Calu3 (cell line): ENCODE measurements at regions of chr16 and their contacts with region 1.

Region 1: DNA sequence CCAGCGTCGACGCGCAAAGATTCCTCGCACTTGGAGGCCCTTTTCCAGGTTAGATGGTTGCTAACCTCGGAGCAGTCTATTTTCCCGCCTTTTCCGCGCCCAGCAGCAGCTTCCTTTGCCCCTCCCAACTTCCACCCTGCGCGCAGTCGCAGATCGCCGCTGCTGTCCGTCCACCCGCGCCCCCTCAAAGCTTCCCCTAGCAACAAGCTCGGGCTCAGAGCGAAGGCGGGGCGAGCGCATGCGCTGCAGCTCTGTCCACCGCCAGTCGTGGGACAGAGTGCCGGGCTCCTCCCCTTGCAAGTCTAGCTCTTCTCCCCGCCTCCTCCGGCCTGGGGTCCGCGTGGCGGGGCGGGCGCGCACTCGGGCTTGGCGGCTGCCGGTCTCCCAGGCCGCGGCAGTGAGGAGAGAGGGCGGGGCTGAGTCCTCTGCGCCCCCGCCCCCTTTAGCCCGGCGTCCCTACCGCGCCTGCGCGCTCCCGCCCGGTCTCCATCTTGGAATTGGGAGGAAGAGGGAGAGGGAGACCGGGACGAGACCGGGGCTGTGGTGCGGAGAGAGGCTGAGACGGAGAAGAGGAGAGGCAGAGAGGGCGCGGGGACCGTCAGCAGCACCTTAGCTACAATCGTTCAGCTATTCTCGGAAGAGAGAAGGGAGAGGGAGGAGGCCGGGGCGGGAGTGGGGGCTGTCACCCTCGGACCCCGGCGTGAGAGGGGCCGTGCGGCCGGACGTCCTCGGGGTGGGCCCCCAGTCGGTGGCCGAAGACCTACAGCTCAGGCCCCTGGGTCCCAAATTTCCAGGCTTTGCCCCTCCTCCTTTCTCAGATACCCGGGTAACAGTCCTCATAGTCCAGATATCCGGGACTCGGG is at the start of gene TAOK2:
- DNase-seq: peak; percentile 99
- H3K4me3 Mint-ChIP-seq: peak within 1 kb of the TSS; percentile 85
- H3K27ac Mint-ChIP-seq: peak within 1 kb of the TSS; percentile 89
- H3K4me1 Mint-ChIP-seq: peaks cover 26% of the 10 kb centered on the region
- H3K27me3 Mint-ChIP-seq: no peaks in the 10 kb centered on the region
- CTCF ChIP-seq: no peak
- total RNA-seq, gene TAOK2: 75.9 and 76.2 TPM in 2 replicates

Region 2: GRCh38 chr16:29909391-29909790 is 64.2 kb before region 1 on chr16:
- CTCF ChIA-PET with region 1: no interaction called
- intact Hi-C with region 1: no loop called
- DNase-seq: no peak
- H3K4me3 Mint-ChIP-seq: no peak overlapping the region
- H3K27ac Mint-ChIP-seq: no peak overlapping the region
- H3K4me1 Mint-ChIP-seq: peaks cover 16% of the 10 kb centered on the region
- H3K27me3 Mint-ChIP-seq: no peaks in the 10 kb centered on the region
- CTCF ChIP-seq: no peak

Region 3: GRCh38 chr16:29926005-29926710 is 47.5 kb before region 1 on chr16 and contains the start of gene KCTD13:
- CTCF ChIA-PET with region 1: interaction called, 7 read pairs
- intact Hi-C with region 1: loop called (anchors 10 kb)
- DNase-seq: peak; percentile 94
- H3K4me3 Mint-ChIP-seq: peak within 1 kb of the TSS; percentile 89
- H3K27ac Mint-ChIP-seq: peak within 1 kb of the TSS; percentile 74
- H3K4me1 Mint-ChIP-seq: peaks cover 29% of the 10 kb centered on the region
- H3K27me3 Mint-ChIP-seq: no peaks in the 10 kb centered on the region
- CTCF ChIP-seq: no peak
- total RNA-seq, gene KCTD13: 52.8 and 55.8 TPM in 2 replicates

Region 4: GRCh38 chr16:29943846-29944669 is 29.6 kb before region 1 on chr16:
- CTCF ChIA-PET with region 1: interaction called, 15 read pairs
- intact Hi-C with region 1: no loop called
- DNase-seq: peak; percentile 82
- H3K4me3 Mint-ChIP-seq: peak overlapping the region; percentile 38
- H3K27ac Mint-ChIP-seq: peak overlapping the region; percentile 69
- H3K4me1 Mint-ChIP-seq: peaks cover 30% of the 10 kb centered on the region
- H3K27me3 Mint-ChIP-seq: no peaks in the 10 kb centered on the region
- CTCF ChIP-seq: peak; percentile 33

Region 5: GRCh38 chr16:29961479-29962343 is 11.9 kb before region 1 on chr16 and contains the start of gene TMEM219:
- CTCF ChIA-PET with region 1: interaction called, 17 read pairs
- intact Hi-C with region 1: no loop called
- DNase-seq: peak; percentile 98
- H3K4me3 Mint-ChIP-seq: peak within 1 kb of the TSS; percentile 82
- H3K27ac Mint-ChIP-seq: peak within 1 kb of the TSS; percentile 92
- H3K4me1 Mint-ChIP-seq: peaks cover 11% of the 10 kb centered on the region
- H3K27me3 Mint-ChIP-seq: no peaks in the 10 kb centered on the region
- CTCF ChIP-seq: peak; percentile 72
- total RNA-seq, gene TMEM219: 91.1 and 92.1 TPM in 2 replicates

Region 6: DNA sequence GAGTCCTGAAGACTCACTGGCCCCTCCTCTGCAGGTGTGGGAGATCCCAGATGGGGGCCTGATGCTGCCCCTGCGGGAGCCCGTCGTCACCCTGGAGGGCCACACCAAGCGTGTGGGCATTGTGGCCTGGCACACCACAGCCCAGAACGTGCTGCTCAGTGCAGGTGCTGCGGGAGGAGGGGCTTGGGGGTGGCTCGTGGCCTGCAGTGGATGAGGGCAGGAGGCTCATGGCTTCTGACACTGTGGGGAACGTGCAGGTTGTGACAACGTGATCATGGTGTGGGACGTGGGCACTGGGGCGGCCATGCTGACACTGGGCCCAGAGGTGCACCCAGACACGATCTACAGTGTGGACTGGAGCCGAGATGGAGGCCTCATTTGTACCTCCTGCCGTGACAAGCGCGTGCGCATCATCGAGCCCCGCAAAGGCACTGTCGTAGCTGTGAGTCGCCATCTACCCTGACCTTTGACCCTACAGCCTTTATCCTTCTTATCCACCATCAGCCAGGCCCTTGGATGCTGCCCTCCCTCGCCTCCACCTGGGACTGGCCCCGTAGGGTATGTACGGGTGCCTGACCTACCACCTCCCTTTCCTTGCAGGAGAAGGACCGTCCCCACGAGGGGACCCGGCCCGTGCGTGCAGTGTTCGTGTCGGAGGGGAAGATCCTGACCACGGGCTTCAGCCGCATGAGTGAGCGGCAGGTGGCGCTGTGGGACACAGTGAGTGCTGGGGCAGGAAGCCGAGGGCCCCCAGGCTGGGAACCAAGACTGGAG is 213.4 kb after region 1 on chr16:
- CTCF ChIA-PET with region 1: no interaction called
- intact Hi-C with region 1: no loop called
- DNase-seq: no peak
- H3K4me3 Mint-ChIP-seq: no peak overlapping the region
- H3K27ac Mint-ChIP-seq: no peak overlapping the region
- H3K4me1 Mint-ChIP-seq: peaks cover 13% of the 10 kb centered on the region
- H3K27me3 Mint-ChIP-seq: no peaks in the 10 kb centered on the region
- CTCF ChIP-seq: no peak